Left cardiac atrium (tissue), 4 donors: ENCODE measurements at regions of chr2 and their contacts with region 1.

Region 1: GRCh38 chr2:238263204-238264071 is 23.6 kb upstream of the HES6 start:
- DNase-seq: peak; percentile 92
- ATAC-seq: peak; percentile 82 to 86

Region 2: GRCh38 chr2:237361194-237361986 is 902.0 kb before region 1 on chr2:
- intact Hi-C with region 1: no loop called
- DNase-seq: no peak
- ATAC-seq: peak; percentile 73 to 81

Region 3: DNA sequence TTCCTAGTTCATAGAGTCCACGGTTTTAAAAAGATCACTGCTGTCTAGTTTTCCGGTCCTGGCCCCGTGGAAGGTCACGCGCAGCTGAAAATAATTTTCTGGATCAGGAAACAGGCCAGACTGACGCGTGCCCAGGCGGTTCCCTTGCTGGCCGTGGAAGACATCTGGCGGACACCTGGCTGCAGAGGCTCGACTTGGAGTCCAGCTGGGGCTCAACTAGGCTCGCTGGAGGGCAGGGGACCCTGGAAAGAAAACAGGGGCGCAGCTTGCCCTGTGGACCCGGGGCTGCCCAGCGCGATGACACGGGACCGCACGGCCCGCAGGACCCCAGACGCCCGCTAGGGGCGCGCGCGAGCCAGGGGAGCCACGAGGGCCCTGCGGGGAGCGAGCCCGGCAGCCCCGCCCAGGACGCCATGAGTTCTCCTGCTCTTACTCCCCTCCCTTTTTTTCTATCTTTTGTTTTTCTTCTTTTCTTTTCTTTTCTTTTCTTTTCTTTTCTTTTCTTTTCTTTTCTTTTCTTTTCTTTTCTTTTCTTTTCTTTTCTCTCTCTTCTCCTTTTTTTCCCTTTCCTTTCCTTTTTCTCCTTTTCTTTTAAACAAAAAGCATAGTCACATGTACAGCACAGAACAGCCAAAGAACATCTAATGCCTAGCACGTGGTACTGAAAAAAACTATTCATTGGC is 339.8 kb before region 1 on chr2:
- intact Hi-C with region 1: loop called in 1 of 2 experiments (anchors 10 kb)
- DNase-seq: peak; percentile 80
- ATAC-seq: peak; percentile 93 to 96